ENCODE measurements at regions of chr10 and their contacts with region 1.

Region 1: GRCh38 chr10:35195361-35196306 is 69.0 kb downstream of the CREM start:
- DNase-seq: peak; percentile 93
- H3K4me3 Mint-ChIP-seq: peak overlapping the region; percentile 81
- H3K27ac Mint-ChIP-seq: peak overlapping the region; percentile 98
- H3K4me1 Mint-ChIP-seq: peaks cover 35% of the 10 kb centered on the region
- H3K27me3 Mint-ChIP-seq: no peaks in the 10 kb centered on the region

Region 2: GRCh38 chr10:33248638-33249037 is 1947.0 kb before region 1 on chr10:
- CTCF ChIA-PET with region 1: no interaction called
- intact Hi-C with region 1: loop called (anchors 5 kb)
- DNase-seq: peak; percentile 49
- H3K4me3 Mint-ChIP-seq: no peak overlapping the region
- H3K27ac Mint-ChIP-seq: no peak overlapping the region
- H3K4me1 Mint-ChIP-seq: peaks cover 75% of the 10 kb centered on the region
- H3K27me3 Mint-ChIP-seq: no peaks in the 10 kb centered on the region

Region 3: GRCh38 chr10:34815185-34816084 is 380.2 kb before region 1 on chr10 and contains the start of gene PARD3:
- CTCF ChIA-PET with region 1: no interaction called
- intact Hi-C with region 1: loop called (anchors 10 kb)
- DNase-seq: peak; percentile 40
- H3K4me3 Mint-ChIP-seq: peak within 1 kb of the TSS; percentile 59
- H3K27ac Mint-ChIP-seq: no peak within 1 kb of the TSS
- H3K4me1 Mint-ChIP-seq: peaks cover 6% of the 10 kb centered on the region
- H3K27me3 Mint-ChIP-seq: peaks cover 49% of the 10 kb centered on the region
- total RNA-seq, gene PARD3: 3.6 to 4.0 TPM

Region 4: GRCh38 chr10:35074266-35074665 is 121.4 kb before region 1 on chr10:
- CTCF ChIA-PET with region 1: no interaction called
- intact Hi-C with region 1: no loop called
- DNase-seq: no peak
- H3K4me3 Mint-ChIP-seq: no peak overlapping the region
- H3K27ac Mint-ChIP-seq: no peak overlapping the region
- H3K4me1 Mint-ChIP-seq: peaks cover 12% of the 10 kb centered on the region
- H3K27me3 Mint-ChIP-seq: no peaks in the 10 kb centered on the region

Region 5: GRCh38 chr10:35090162-35090954 is 105.3 kb before region 1 on chr10 and contains the start of gene CUL2:
- CTCF ChIA-PET with region 1: interaction called, 11 read pairs
- intact Hi-C with region 1: loop called (anchors 1 kb)
- DNase-seq: peak; percentile 94
- H3K4me3 Mint-ChIP-seq: peak within 1 kb of the TSS; percentile 90
- H3K27ac Mint-ChIP-seq: peak within 1 kb of the TSS; percentile 92
- H3K4me1 Mint-ChIP-seq: peaks cover 45% of the 10 kb centered on the region
- H3K27me3 Mint-ChIP-seq: no peaks in the 10 kb centered on the region
- total RNA-seq, gene CUL2: 35.3 to 36.9 TPM

Region 6: DNA sequence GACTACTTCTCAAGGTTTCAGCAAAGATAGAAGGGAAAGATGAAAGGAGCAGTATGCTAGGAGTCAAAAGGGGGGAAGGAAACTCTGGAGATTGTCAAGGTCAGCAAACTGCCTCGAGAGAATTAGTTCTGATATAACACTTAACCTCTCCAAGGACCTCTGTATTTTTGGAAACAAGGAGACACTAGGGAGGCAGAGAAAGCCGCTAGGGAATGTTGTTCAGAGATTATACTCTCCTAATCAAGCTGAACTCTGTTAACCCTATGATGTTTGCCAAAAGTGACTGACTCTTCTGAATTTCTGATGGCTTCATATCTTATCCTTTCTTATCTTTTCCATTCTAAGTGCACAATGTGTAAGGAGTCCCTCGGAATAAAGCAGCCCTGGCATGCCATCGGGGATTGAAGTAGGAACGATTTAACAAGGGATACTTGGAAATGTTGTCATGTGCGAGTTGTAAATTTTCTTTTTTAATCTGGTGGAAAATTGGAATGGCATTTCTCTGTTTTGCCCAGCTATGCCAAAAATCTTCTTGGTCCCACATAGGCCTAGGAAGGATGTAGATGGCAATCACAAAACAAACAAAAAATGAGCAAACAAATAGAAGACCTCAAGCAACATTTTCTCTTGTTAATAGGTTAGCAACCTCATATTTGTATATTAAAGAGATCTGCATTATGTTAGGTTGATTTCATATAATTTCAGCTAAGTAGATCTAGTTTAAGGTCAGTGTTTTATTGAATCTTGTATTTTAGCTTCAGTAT is 41.7 kb before region 1 on chr10:
- CTCF ChIA-PET with region 1: interaction called, 24 read pairs
- intact Hi-C with region 1: loop called (anchors 1 kb)
- DNase-seq: no peak
- H3K4me3 Mint-ChIP-seq: no peak overlapping the region
- H3K27ac Mint-ChIP-seq: no peak overlapping the region
- H3K4me1 Mint-ChIP-seq: peaks cover 36% of the 10 kb centered on the region
- H3K27me3 Mint-ChIP-seq: no peaks in the 10 kb centered on the region

Region 7: GRCh38 chr10:35228058-35228457 is 32.4 kb after region 1 on chr10:
- CTCF ChIA-PET with region 1: no interaction called
- intact Hi-C with region 1: no loop called
- DNase-seq: no peak
- H3K4me3 Mint-ChIP-seq: no peak overlapping the region
- H3K27ac Mint-ChIP-seq: no peak overlapping the region
- H3K4me1 Mint-ChIP-seq: peaks cover 7% of the 10 kb centered on the region
- H3K27me3 Mint-ChIP-seq: no peaks in the 10 kb centered on the region

Region 8: GRCh38 chr10:35271086-35271858 is 75.6 kb after region 1 on chr10:
- CTCF ChIA-PET with region 1: no interaction called
- intact Hi-C with region 1: loop called (anchors 1 kb)
- DNase-seq: no peak
- H3K4me3 Mint-ChIP-seq: no peak overlapping the region
- H3K27ac Mint-ChIP-seq: no peak overlapping the region
- H3K4me1 Mint-ChIP-seq: peaks cover 17% of the 10 kb centered on the region
- H3K27me3 Mint-ChIP-seq: peaks cover 3% of the 10 kb centered on the region

Region 9: DNA sequence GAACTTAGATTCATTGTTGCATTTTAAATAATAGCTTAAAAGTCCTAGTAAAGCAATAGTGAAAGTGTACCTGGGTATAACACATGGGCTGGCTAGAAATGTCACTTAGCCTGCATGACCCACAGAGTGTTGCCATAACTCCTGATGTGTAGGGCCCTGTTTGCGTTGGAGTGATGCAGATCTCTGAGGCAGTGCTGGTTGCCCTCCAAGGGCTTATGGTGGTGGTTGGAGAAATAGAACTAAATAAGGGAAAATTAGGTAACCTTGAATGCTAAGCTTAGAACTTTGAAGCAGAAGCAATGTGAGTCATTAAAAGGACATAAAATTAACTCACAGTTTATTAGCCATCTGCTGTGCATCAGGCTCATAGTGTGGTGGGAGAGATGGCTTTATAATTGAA is 246.4 kb after region 1 on chr10:
- CTCF ChIA-PET with region 1: interaction called, 3 read pairs
- intact Hi-C with region 1: loop called (anchors 1 kb)
- DNase-seq: peak; percentile 36
- H3K4me3 Mint-ChIP-seq: no peak overlapping the region
- H3K27ac Mint-ChIP-seq: peak overlapping the region; percentile 78
- H3K4me1 Mint-ChIP-seq: peaks cover 47% of the 10 kb centered on the region
- H3K27me3 Mint-ChIP-seq: no peaks in the 10 kb centered on the region

Measured in activated naive CD4-positive, alpha-beta T cell treated with anti-CD3 and anti-CD28 coated beads for 36 hours (primary cell).